HepG2 (cell line): ENCODE measurements at regions of chr6 and their contacts with region 1.

Region 1: GRCh38 chr6:81766482-81767069 is 14.1 kb upstream of the TENT5A start:
- DNase-seq: peak; percentile 78
- ATAC-seq: peak; percentile 80
- H3K4me3 ChIP-seq: peak overlapping the region in 1 of 3 experiments; percentile 41; a peak in 1 of 6 replicates
- H3K27ac ChIP-seq: peak overlapping the region; percentile 14
- H3K4me1 ChIP-seq: peaks cover 84% of the 10 kb centered on the region
- H3K27me3 ChIP-seq: no peaks in the 10 kb centered on the region
- CTCF ChIP-seq: no peak
- EP300 ChIP-seq: peak in 1 of 2 experiments; percentile 77; a peak in 2 of 4 replicates
- POLR2A ChIP-seq: no peak
- RAD21 ChIP-seq: no peak

Region 2: GRCh38 chr6:81787313-81788068 is 20.9 kb after region 1 on chr6:
- CTCF ChIA-PET with region 1: no interaction called
- POLR2A ChIA-PET with region 1: interaction called, 4 read pairs
- in situ Hi-C with region 1: no loop called
- intact Hi-C with region 1: loop called (anchors 2 kb)
- DNase-seq: peak; percentile 58
- ATAC-seq: peak; percentile 86
- H3K4me3 ChIP-seq: peak overlapping the region in 1 of 3 experiments; percentile 1; a peak in 1 of 6 replicates
- H3K27ac ChIP-seq: no peak overlapping the region
- H3K4me1 ChIP-seq: peaks cover 44% of the 10 kb centered on the region
- H3K27me3 ChIP-seq: no peaks in the 10 kb centered on the region
- CTCF ChIP-seq: no peak
- EP300 ChIP-seq: 0 out of 4 replicates have a peak, but pooled peaks of 1 of the 2 experiments have one; percentile 19
- POLR2A ChIP-seq: no peak
- RAD21 ChIP-seq: no peak

Region 3: DNA sequence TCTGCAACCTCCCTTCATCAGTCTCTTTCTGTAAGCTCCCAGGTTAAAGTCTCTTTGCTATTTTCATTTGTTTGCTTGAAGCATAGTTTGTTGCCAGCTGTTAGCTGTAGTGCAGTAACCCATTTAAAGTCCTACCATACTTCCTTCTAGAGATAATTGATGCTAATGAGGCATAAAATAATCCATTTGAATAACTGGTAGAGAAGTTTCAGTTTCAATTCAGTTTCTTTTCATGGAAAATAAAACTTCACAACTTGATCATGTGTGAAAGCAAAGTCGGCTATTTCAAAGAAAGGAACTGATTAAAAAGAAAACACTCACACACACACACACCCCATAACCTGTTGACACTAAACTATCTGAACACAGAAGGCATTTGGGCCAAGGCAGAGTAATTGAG is 54.4 kb after region 1 on chr6:
- CTCF ChIA-PET with region 1: no interaction called
- POLR2A ChIA-PET with region 1: no interaction called
- in situ Hi-C with region 1: no loop called
- intact Hi-C with region 1: loop called (anchors 5 kb)
- DNase-seq: no peak
- ATAC-seq: peak; percentile 47; the same call in 1 of the 3 replicates
- H3K4me3 ChIP-seq: 0 out of 6 replicates have a peak overlapping the region, but pooled peaks of 1 of the 3 experiments have one; percentile 6
- H3K27ac ChIP-seq: no peak overlapping the region
- H3K4me1 ChIP-seq: peaks cover 60% of the 10 kb centered on the region
- H3K27me3 ChIP-seq: no peaks in the 10 kb centered on the region
- CTCF ChIP-seq: no peak
- EP300 ChIP-seq: no peak
- POLR2A ChIP-seq: no peak
- RAD21 ChIP-seq: no peak

Region 4: DNA sequence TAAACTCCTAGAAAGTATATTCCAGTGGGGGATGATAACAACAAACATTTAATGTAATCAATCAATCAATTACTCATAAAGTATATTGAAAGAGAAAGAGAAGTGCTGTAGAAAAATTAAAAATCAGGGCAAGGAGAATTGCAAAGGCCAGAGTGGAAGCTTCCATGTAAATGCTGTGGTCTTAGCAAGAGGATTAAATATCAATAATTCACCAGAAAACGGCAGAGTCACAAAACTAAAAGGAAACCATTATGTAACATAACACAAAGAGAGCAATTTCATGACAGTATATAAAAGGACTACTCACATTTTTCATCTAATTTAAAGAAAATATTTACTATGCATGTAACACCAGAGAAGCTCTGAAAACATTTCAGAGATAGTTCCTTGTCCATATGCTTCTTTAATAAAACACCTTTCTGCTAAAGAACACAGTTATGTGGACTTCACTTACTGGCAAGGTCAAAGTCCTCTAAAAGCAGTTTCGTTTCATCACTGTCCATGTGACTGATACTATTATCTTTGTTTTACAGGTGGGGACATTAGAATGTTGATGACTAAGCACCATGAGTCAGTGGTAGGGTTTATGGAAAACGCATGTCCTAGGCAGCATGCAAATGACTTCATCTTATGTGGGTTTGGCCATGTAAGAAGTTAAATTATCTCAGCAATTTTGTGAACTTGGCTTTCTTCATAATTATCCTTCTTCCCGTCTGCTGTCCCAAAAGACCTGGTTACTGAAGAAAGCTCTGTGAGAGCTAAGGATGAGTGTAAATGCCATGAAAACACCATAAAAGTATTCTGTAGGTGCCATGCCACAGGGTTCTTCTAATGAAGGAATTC is 171.7 kb after region 1 on chr6:
- CTCF ChIA-PET with region 1: no interaction called
- POLR2A ChIA-PET with region 1: no interaction called
- in situ Hi-C with region 1: no loop called
- intact Hi-C with region 1: loop called (anchors 5 kb)
- DNase-seq: peak; percentile 93
- ATAC-seq: peak; percentile 91
- H3K4me3 ChIP-seq: peak overlapping the region; percentile 11 to 43 (median 37); a peak in 4 of 6 replicates
- H3K27ac ChIP-seq: peak overlapping the region; percentile 64
- H3K4me1 ChIP-seq: peaks cover 65% of the 10 kb centered on the region
- H3K27me3 ChIP-seq: no peaks in the 10 kb centered on the region
- CTCF ChIP-seq: no peak
- EP300 ChIP-seq: peak in 1 of 2 experiments; percentile 80; a peak in 2 of 4 replicates
- POLR2A ChIP-seq: no peak
- RAD21 ChIP-seq: no peak

Region 5: GRCh38 chr6:81962214-81962613 is 195.6 kb after region 1 on chr6:
- CTCF ChIA-PET with region 1: no interaction called
- POLR2A ChIA-PET with region 1: no interaction called
- in situ Hi-C with region 1: no loop called
- intact Hi-C with region 1: no loop called
- DNase-seq: no peak
- ATAC-seq: no peak
- H3K4me3 ChIP-seq: no peak overlapping the region
- H3K27ac ChIP-seq: no peak overlapping the region
- H3K4me1 ChIP-seq: no peaks in the 10 kb centered on the region
- H3K27me3 ChIP-seq: no peaks in the 10 kb centered on the region
- CTCF ChIP-seq: no peak
- EP300 ChIP-seq: no peak
- POLR2A ChIP-seq: no peak
- RAD21 ChIP-seq: no peak

Region 6: GRCh38 chr6:82419132-82419581 is 652.6 kb after region 1 on chr6:
- CTCF ChIA-PET with region 1: no interaction called
- POLR2A ChIA-PET with region 1: no interaction called
- in situ Hi-C with region 1: no loop called
- intact Hi-C with region 1: no loop called
- DNase-seq: no peak
- ATAC-seq: no peak
- H3K4me3 ChIP-seq: no peak overlapping the region
- H3K27ac ChIP-seq: no peak overlapping the region
- H3K4me1 ChIP-seq: no peaks in the 10 kb centered on the region
- H3K27me3 ChIP-seq: no peaks in the 10 kb centered on the region; a peak in 1 of 5 replicates
- CTCF ChIP-seq: no peak
- EP300 ChIP-seq: no peak
- POLR2A ChIP-seq: no peak
- RAD21 ChIP-seq: no peak